HAP-1 (cell line): ENCODE measurements at regions of chr12 and their contacts with region 1.

Region 1: DNA sequence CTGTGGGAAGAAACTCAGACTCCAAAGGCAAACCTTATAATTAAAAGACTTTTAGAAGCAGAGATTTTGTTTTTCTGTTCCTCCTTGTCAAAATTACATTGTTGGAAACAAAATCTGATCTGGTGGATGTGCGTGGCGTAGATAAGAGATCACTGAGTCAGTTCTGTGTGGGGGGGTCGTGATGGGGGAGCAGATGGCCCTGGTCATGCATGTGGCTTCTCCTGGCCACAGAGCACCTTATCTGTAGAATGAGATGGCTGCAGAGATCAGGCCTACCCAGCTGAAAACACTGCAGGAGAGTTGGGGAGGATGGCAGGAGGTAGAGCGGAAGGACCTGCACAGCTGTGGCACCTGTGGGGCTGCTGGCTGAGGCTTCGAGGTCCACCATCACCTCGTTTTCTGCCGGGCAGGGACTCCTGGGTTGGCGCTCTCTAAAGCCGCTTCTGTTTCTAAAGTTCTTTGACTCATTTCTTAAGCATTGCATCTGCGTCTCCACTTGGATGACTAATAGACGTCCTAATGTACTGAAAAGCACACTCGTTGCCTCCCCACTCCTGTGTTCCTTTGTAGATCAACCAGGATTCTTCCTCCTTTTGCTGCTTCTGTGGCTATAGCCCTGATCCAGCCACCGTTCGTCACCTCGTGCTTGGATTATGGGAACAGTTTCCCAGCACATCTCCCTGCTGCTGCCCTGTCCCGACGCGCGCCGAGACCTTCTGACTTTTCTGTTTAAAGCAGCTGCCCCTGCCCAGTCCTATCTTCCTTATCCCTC is 93.4 kb downstream of the TSPAN9 start:
- DNase-seq: no peak
- H3K4me3 ChIP-seq: no peak overlapping the region
- H3K4me1 ChIP-seq: no peaks in the 10 kb centered on the region
- H3K27me3 ChIP-seq: no peaks in the 10 kb centered on the region

Region 2: GRCh38 chr12:3041558-3042164 is 128.9 kb before region 1 on chr12:
- in situ Hi-C with region 1: no loop called
- DNase-seq: peak; percentile 65 to 83
- H3K4me3 ChIP-seq: no peak overlapping the region
- H3K4me1 ChIP-seq: no peaks in the 10 kb centered on the region
- H3K27me3 ChIP-seq: no peaks in the 10 kb centered on the region

Region 3: DNA sequence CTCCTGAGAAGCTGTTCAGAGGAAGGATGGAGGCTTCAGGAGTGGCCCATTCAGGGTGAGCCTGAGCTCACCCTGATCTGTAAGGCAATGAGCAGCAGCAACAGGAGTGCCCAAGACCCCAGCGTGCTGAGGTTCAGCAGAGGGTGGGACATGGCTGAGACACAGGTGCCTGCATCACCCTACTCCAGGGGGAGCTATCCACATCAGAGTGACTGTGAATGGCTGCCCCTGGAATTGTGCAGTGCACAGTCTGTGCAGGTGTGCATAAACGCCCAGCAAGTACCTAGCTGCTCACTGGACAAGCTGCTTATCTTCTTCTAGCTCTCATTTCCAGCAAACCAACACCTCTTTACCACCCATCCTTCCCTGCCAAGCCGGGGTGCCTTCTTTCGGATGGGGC is 179.8 kb after region 1 on chr12:
- in situ Hi-C with region 1: no loop called
- DNase-seq: no peak
- H3K4me3 ChIP-seq: no peak overlapping the region
- H3K4me1 ChIP-seq: no peaks in the 10 kb centered on the region
- H3K27me3 ChIP-seq: peaks cover 4% of the 10 kb centered on the region; the same call in 1 of the 2 replicates

Region 4: DNA sequence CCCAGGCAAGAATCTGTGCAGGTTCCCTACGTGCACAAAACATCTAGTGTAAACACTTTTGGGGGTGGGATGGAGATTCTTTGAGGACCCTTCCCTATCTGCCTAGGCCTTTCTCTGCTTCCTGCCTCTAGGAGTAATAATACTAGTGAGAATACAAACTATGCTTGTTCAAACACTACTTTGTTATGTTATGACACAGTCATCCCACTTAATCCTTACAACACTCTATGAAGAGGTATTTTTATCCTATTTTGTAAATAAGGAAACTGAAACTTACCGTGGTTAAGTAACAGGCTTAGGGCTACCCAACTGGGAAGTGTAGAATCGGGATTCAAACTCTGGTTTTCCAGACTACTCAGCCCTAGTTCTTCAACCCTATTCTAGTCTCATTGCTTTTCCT is 1969.6 kb after region 1 on chr12:
- in situ Hi-C with region 1: loop called (anchors 10 kb)
- DNase-seq: no peak
- H3K4me3 ChIP-seq: no peak overlapping the region
- H3K4me1 ChIP-seq: no peaks in the 10 kb centered on the region
- H3K27me3 ChIP-seq: no peaks in the 10 kb centered on the region